Astrocyte of the spinal cord (primary cell): ENCODE measurements at regions of chr1 and their contacts with region 1.

Region 1: DNA sequence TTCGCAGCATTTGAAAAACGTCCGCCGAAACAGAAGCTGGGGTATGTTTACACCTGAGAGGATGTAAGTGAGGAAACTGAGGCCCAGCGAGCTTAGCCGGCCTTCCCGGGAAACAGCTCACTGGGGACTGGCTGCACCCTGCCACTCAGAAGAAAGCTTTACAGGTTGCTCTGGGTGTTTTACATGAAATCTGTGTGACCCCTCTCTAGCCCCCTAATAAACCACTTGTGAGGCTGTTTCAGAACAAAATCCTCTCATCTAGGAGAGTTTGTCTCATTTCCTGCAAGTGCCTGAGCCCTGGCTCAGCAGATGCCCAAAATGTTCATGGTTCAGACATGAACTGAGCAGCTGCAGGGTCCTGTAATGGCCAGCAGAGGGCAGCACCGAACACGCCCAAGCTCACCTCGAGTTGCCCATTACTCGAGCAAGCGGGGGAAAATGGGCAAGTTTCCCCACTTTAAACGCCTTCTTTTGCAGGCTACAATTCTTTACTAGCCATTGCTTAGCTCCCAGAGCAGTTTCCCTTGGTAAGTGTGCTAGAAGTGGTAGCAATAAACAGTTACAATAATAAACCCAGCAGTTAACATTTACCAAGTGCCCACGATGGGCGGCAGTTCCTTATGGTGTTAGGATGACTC is 76.4 kb downstream of the FHAD1 start:
- DNase-seq: peak; percentile 82
- H3K4me3 ChIP-seq: no peak overlapping the region
- CTCF ChIP-seq: peak; percentile 96

Region 2: GRCh38 chr1:15028102-15028501 is 295.4 kb before region 1 on chr1:
- in situ Hi-C with region 1: no loop called
- DNase-seq: peak; percentile 92
- H3K4me3 ChIP-seq: no peak overlapping the region
- CTCF ChIP-seq: no peak

Region 3: GRCh38 chr1:15128520-15129313 is 194.8 kb before region 1 on chr1:
- in situ Hi-C with region 1: no loop called
- DNase-seq: peak; percentile 62
- H3K4me3 ChIP-seq: no peak overlapping the region
- CTCF ChIP-seq: peak; percentile 94

Region 4: GRCh38 chr1:15409388-15410222 is 86.1 kb after region 1 on chr1 and contains the start of gene EFHD2:
- in situ Hi-C with region 1: loop called (anchors 10 kb)
- DNase-seq: peak; percentile 65
- H3K4me3 ChIP-seq: peak within 1 kb of the TSS; percentile 84
- CTCF ChIP-seq: no peak